GM12878 (cell line): ENCODE measurements at regions of chr4 and their contacts with region 1.

Region 1: DNA sequence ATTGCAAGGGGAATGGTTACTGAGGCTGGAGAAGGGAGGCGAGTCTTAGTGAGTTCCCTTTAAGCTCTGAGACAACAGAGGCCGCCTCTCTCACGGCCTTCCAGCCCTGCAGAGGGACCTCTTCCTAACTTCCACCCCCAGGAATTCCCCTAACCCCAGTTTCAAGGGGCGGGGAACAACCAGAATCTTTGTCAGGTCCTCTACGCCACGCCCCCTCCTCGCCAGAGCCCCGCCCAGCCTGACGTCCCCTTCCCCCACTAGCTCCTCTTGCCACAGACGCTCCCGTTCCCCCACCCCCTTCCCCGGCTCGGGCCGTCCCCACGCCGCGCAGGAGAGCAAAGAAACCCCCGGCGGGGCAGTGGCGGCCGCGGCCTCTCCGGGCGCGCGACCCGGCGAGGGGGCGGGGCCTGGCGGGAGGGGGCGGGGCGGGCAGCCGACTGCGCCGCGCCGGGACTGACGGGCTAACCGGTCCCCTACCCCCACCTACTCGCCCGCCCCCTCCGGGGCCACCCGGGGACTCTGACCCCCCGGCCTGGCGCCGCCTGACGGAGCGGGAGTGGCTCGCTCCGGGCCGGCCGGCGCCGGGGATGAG is 12.3 kb upstream of the TMEM156 start:
- DNase-seq: peak; percentile 90
- ATAC-seq: peak; percentile 83
- H3K4me3 ChIP-seq: peak overlapping the region; percentile 83
- H3K27ac ChIP-seq: peak overlapping the region; percentile 81
- H3K4me1 ChIP-seq: peaks cover 14% of the 10 kb centered on the region
- H3K27me3 ChIP-seq: no peaks in the 10 kb centered on the region
- CTCF ChIP-seq: peak in 1 of 3 experiments; percentile 23; a peak in 1 of 6 replicates
- EP300 ChIP-seq: peak in 1 of 2 experiments; percentile 52; a peak in 1 of 4 replicates
- POLR2A ChIP-seq: peak; percentile 74
- RAD21 ChIP-seq: no peak

Region 2: DNA sequence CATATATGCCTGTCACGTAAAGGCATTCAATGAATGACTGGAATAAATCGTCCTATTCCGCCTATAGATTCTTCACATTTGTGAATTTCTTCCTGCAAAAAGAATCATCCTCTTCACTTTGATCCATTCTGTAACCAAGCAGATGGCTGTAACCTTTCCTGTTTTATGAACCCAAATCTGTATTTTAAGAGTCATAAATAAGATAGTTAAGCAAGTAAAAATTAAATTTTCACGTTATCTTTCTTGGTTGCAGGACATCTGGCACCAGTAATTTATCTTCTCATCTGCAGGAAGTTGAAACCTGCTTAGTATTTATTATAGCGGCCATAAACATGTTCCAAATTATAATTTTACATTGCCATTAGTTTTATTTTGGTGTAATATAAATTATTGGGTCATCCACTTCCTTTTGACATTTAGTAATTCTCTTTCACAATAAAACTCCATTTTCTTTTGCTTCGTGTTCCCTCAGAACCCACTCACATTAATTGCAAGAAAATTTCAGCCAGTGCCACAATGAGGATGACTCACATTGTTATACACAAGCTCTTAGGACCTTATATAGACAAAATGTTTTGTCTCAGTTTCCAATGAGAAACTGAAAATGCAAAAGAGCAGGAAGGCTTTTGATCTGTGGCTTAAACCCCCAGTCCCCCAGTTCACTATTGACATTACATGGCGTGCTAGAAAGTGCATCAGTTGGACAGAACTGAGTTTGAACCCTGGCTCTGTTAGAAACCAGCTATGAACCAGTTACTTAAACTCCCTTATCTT is 63.4 kb before region 1 on chr4:
- CTCF ChIA-PET with region 1: no interaction called
- POLR2A ChIA-PET with region 1: interaction called, 3 read pairs
- RAD21 ChIA-PET with region 1: interaction called, 12 read pairs
- SMC1A ChIA-PET with region 1: interaction called, 5 read pairs
- in situ Hi-C with region 1: no loop called
- intact Hi-C with region 1: no loop called
- DNase-seq: peak; percentile 24
- ATAC-seq: peak; percentile 82
- H3K4me3 ChIP-seq: no peak overlapping the region
- H3K27ac ChIP-seq: peak overlapping the region; percentile 52
- H3K4me1 ChIP-seq: peaks cover 19% of the 10 kb centered on the region
- H3K27me3 ChIP-seq: no peaks in the 10 kb centered on the region
- CTCF ChIP-seq: no peak
- EP300 ChIP-seq: no peak
- POLR2A ChIP-seq: no peak
- RAD21 ChIP-seq: no peak

Region 3: GRCh38 chr4:39062094-39062769 is 17.8 kb after region 1 on chr4 and contains the start of gene KLHL5:
- CTCF ChIA-PET with region 1: interaction called, 12 read pairs
- POLR2A ChIA-PET with region 1: interaction called, 11 read pairs
- RAD21 ChIA-PET with region 1: interaction called, 13 read pairs
- SMC1A ChIA-PET with region 1: interaction called, 52 read pairs
- in situ Hi-C with region 1: no loop called
- intact Hi-C with region 1: no loop called
- DNase-seq: no peak
- ATAC-seq: peak; percentile 75
- H3K4me3 ChIP-seq: no peak within 1 kb of the TSS
- H3K27ac ChIP-seq: peak within 1 kb of the TSS; percentile 27; the same call in 1 of the 2 replicates
- H3K4me1 ChIP-seq: peaks cover 9% of the 10 kb centered on the region
- H3K27me3 ChIP-seq: no peaks in the 10 kb centered on the region
- CTCF ChIP-seq: no peak
- EP300 ChIP-seq: no peak
- POLR2A ChIP-seq: no peak
- RAD21 ChIP-seq: no peak
- polyA plus RNA-seq, gene KLHL5: 4.7 to 7.4 TPM

Region 4: DNA sequence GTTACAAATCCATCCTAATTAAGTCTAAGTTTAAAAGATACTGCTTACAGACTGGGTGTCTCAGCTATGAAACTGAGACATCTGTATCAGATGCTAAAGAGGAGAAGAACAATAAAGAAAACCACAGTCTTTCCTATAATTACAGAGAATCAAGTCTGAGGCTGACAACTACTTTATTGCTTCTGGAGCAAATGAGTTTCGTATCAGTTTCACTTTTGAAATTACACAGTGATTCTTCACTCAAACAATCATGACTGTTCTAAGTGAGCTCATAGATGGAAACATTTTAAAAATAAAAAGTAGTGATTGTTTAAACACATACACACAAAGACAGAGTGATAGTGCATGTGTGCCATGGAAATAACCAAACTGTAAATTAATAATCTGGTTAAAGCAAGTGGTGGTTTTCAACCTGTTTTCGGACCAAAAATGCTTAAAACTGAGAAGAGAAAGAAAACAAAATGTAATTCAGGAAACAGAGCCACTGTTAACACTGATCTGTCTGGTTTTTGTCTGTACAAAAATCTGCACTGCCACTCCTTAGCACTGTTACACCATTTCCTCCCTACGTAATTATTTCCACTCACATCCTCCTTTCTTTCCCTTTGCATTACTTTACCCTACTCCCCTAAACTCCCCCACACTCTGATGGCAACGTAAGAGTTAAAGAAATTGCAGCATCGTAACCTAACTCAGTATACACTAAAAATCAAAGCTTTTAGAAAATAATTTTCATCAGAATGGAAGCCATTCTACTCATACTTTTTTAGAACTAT is 309.2 kb after region 1 on chr4:
- CTCF ChIA-PET with region 1: no interaction called
- POLR2A ChIA-PET with region 1: interaction called, 3 read pairs
- RAD21 ChIA-PET with region 1: no interaction called
- SMC1A ChIA-PET with region 1: no interaction called
- in situ Hi-C with region 1: no loop called
- intact Hi-C with region 1: loop called (anchors 10 kb)
- DNase-seq: peak; percentile 85
- ATAC-seq: peak; percentile 85
- H3K4me3 ChIP-seq: peak overlapping the region; percentile 48; the same call in 1 of the 2 replicates
- H3K27ac ChIP-seq: peak overlapping the region; percentile 70
- H3K4me1 ChIP-seq: peaks cover 42% of the 10 kb centered on the region
- H3K27me3 ChIP-seq: no peaks in the 10 kb centered on the region
- CTCF ChIP-seq: no peak
- EP300 ChIP-seq: peak; percentile 75 to 77; a peak in 3 of 4 replicates
- POLR2A ChIP-seq: no peak
- RAD21 ChIP-seq: no peak

Region 5: DNA sequence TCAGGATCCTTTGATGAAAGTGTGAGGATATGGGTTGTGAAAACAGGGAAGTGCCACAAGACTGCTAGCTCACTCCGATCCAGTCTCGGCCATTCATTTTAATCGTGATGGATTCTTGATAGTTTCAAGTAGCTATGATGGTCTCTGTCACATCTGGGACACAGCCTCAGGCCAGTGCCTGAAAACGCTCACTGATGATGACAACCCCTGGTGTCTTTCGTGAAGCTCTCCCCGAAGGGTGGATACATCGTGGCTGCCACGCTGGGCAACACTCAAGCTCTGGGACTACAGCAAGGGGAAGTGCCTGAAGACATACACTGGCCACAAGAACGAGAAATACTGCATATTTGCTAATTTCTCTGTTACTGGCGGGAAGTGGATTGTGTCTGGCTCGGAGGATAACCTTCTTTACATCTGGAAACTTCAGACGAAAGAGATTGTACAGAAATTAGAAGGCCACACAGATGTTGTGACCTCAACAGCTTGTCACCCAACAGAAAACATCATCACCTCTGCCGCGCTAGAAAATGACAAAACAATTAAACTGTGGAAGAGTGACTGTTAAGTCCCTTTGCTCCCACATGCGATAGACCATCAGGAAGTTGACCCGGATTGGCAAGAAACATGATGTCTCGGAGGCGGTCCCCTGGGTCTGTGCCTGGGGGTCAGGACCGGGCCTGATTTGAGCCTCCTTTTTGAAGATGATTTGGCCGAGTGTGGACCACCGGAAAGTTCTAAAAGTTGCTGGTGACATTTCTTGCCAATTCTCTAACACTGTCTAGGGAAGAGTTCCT is 436.6 kb after region 1 on chr4:
- CTCF ChIA-PET with region 1: no interaction called
- POLR2A ChIA-PET with region 1: no interaction called
- RAD21 ChIA-PET with region 1: no interaction called
- SMC1A ChIA-PET with region 1: no interaction called
- in situ Hi-C with region 1: no loop called
- intact Hi-C with region 1: no loop called
- DNase-seq: no peak
- ATAC-seq: no peak
- H3K4me3 ChIP-seq: no peak overlapping the region
- H3K27ac ChIP-seq: no peak overlapping the region
- H3K4me1 ChIP-seq: no peaks in the 10 kb centered on the region
- H3K27me3 ChIP-seq: no peaks in the 10 kb centered on the region
- CTCF ChIP-seq: no peak
- EP300 ChIP-seq: no peak
- POLR2A ChIP-seq: no peak
- RAD21 ChIP-seq: no peak